ENCODE measurements at regions of chr1 and their contacts with region 1.

Region 1: DNA sequence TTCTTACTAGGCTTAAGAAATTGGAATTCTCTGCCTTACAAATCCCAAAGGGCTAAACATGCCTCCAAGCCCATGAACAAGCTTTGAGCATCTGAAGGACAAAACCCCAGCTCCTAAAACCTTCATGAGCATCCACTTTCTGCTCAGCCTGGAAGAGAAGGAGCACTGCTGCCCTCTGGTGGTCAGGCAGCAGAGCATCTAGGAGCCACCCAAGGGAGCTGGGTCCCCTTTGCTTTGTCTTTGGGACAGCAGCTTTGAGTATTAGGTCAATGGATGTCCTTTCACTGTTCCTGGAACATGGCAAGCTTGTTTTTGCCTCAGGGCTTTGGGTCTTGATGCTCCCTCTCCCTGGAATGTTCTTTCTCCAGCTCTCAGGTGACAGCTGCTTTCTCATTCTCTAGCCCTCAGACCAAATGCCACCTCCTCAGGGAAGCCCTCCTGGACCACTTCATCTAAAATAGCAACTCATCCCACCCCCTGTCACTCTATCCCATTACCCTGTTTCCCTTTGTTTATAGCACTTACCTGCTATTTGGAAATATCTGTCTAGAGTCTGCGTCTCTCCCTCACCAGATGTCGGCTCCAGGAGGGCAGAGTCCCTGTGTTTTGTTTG is 25.7 kb downstream of the RAB7B start:
- DNase-seq: peak; percentile 63 to 70 (median 69)
- H3K4me3 ChIP-seq: no peak overlapping the region
- H3K4me3 Mint-ChIP-seq: no peak overlapping the region
- H3K27ac ChIP-seq: no peak overlapping the region
- H3K27ac Mint-ChIP-seq: peak overlapping the region in 1 of 7 donors; percentile 5
- H3K4me1 ChIP-seq: no peaks in the 10 kb centered on the region
- H3K4me1 Mint-ChIP-seq: peaks cover 0 to 6% (median under 1%) of the 10 kb centered on the region in 4 donors
- H3K27me3 ChIP-seq: no peaks in the 10 kb centered on the region
- H3K27me3 Mint-ChIP-seq: peaks cover 4 to 7% of the 10 kb centered on the region in 2 donors

Region 2: GRCh38 chr1:205528887-205529825 is 448.4 kb before region 1 on chr1:
- CTCF ChIA-PET with region 1: interaction called, 3 read pairs
- POLR2A ChIA-PET with region 1: no interaction called
- intact Hi-C with region 1: loop called (anchors 2 kb)
- DNase-seq: peak; percentile 66 to 76 (median 69)
- H3K4me3 ChIP-seq: no peak overlapping the region
- H3K4me3 Mint-ChIP-seq: peak overlapping the region in 5 of 8 donors; percentile 26 to 73 (median 39)
- H3K27ac ChIP-seq: no peak overlapping the region
- H3K27ac Mint-ChIP-seq: peak overlapping the region in 1 of 7 donors; percentile 73
- H3K4me1 ChIP-seq: no peaks in the 10 kb centered on the region
- H3K4me1 Mint-ChIP-seq: peaks cover 0 to 5% (median 4%) of the 10 kb centered on the region in 4 donors
- H3K27me3 ChIP-seq: no peaks in the 10 kb centered on the region
- H3K27me3 Mint-ChIP-seq: peaks cover 3 to 4% of the 10 kb centered on the region in 2 donors

Region 3: DNA sequence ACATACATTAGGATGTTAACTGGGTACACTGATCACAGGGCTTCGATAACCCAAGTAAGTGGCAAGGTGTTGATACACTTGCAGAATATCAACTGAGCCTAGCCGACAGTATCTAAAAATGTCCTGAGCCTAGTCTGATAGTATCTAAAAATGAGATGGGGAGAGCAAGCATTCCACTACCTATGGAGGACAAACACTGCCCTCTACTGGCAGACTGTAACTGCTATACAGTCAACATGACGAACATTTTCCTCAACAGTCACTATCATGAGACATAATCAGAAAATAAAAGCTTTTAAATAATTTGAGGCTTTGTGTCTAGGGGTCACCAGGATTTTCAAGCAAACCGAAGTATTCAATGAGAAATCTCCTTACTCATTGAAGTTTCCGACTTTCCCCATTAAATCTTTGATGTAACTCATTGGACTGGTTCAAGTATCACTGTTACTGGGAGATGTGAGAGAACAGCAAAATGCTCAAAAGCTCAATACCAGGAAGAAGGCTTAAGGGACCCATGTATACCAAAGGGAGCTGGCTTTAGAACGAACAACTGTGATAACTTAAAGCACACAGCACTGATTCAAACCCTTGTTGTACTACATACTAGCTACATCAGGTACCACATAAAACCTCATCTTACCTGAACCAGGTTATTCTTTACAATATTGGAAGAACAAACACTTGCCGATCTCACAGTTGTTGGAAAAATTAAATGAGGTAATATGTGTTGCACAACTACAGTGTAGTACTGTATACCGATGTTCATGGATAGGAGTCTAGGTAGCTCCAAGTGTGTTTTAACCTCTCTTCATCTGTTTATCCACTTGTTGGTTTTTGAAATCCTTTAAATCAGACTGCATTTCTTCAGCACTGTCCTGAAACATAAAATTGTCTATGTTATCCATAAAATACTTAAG is 266.1 kb before region 1 on chr1:
- CTCF ChIA-PET with region 1: interaction called, 13 read pairs
- POLR2A ChIA-PET with region 1: no interaction called
- intact Hi-C with region 1: loop called (anchors 5 kb)
- DNase-seq: peak; percentile 54 to 67 (median 62)
- H3K4me3 ChIP-seq: no peak overlapping the region
- H3K4me3 Mint-ChIP-seq: no peak overlapping the region
- H3K27ac ChIP-seq: no peak overlapping the region
- H3K27ac Mint-ChIP-seq: peak overlapping the region in 4 of 7 donors; percentile 25 to 68 (median 56)
- H3K4me1 ChIP-seq: peaks cover 3% of the 10 kb centered on the region
- H3K4me1 Mint-ChIP-seq: peaks cover 5 to 14% (median 11%) of the 10 kb centered on the region in 4 donors
- H3K27me3 ChIP-seq: no peaks in the 10 kb centered on the region
- H3K27me3 Mint-ChIP-seq: no peaks in the 10 kb centered on the region

Region 4: DNA sequence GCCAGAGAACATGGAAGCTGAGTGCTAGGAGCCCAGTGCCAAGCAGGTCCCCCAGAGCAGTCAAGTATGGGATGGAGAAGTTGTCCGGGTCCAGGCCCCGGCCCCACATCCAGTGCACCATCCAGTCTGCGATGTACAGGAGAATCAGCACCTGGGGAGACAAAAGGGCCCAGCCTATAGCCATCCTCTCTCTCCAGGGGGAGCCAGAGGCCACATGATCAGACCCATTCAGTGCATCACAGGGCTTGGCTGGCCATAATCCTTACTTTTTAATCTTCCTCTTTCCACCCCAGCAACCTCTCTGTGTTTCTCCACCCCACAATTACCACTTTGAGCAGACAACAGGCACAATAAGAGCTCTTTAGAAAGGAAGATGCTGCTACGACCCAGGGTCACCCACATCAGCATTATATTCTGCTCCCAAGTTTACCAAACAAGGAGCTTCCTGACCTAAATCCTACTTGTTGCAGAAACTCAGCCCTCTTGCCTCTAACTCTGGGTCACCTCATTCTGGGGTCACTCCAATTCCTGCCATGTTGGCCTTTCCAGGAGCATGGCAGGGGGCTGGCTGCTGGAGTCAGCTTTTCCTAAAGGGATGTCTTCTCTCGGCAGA is 185.8 kb before region 1 on chr1:
- CTCF ChIA-PET with region 1: interaction called, 268 read pairs
- POLR2A ChIA-PET with region 1: interaction called, 10 read pairs
- intact Hi-C with region 1: no loop called
- DNase-seq: peak; percentile 51 to 64 (median 56)
- H3K4me3 ChIP-seq: no peak overlapping the region
- H3K4me3 Mint-ChIP-seq: no peak overlapping the region
- H3K27ac ChIP-seq: no peak overlapping the region
- H3K27ac Mint-ChIP-seq: peak overlapping the region in 2 of 7 donors; percentile 74 to 81
- H3K4me1 ChIP-seq: no peaks in the 10 kb centered on the region
- H3K4me1 Mint-ChIP-seq: no peaks in the 10 kb centered on the region
- H3K27me3 ChIP-seq: no peaks in the 10 kb centered on the region
- H3K27me3 Mint-ChIP-seq: no peaks in the 10 kb centered on the region

Region 5: GRCh38 chr1:205879975-205880374 is 97.5 kb before region 1 on chr1:
- CTCF ChIA-PET with region 1: no interaction called
- POLR2A ChIA-PET with region 1: no interaction called
- intact Hi-C with region 1: no loop called
- DNase-seq: no peak
- H3K4me3 ChIP-seq: no peak overlapping the region
- H3K4me3 Mint-ChIP-seq: no peak overlapping the region
- H3K27ac ChIP-seq: no peak overlapping the region
- H3K27ac Mint-ChIP-seq: no peak overlapping the region
- H3K4me1 ChIP-seq: no peaks in the 10 kb centered on the region
- H3K4me1 Mint-ChIP-seq: no peaks in the 10 kb centered on the region
- H3K27me3 ChIP-seq: no peaks in the 10 kb centered on the region
- H3K27me3 Mint-ChIP-seq: peaks cover 2 to 10% of the 10 kb centered on the region in 2 donors

Region 6: GRCh38 chr1:205919026-205919746 is 58.3 kb before region 1 on chr1:
- CTCF ChIA-PET with region 1: interaction called, 43 read pairs
- POLR2A ChIA-PET with region 1: no interaction called
- intact Hi-C with region 1: loop called (anchors 1 kb)
- DNase-seq: peak; percentile 41 to 62 (median 51)
- H3K4me3 ChIP-seq: no peak overlapping the region
- H3K4me3 Mint-ChIP-seq: no peak overlapping the region
- H3K27ac ChIP-seq: no peak overlapping the region
- H3K27ac Mint-ChIP-seq: no peak overlapping the region
- H3K4me1 ChIP-seq: no peaks in the 10 kb centered on the region
- H3K4me1 Mint-ChIP-seq: peaks cover 0 to 1% (median 0%) of the 10 kb centered on the region in 4 donors
- H3K27me3 ChIP-seq: no peaks in the 10 kb centered on the region
- H3K27me3 Mint-ChIP-seq: peaks cover 0 to 5% of the 10 kb centered on the region in 2 donors

Region 7: DNA sequence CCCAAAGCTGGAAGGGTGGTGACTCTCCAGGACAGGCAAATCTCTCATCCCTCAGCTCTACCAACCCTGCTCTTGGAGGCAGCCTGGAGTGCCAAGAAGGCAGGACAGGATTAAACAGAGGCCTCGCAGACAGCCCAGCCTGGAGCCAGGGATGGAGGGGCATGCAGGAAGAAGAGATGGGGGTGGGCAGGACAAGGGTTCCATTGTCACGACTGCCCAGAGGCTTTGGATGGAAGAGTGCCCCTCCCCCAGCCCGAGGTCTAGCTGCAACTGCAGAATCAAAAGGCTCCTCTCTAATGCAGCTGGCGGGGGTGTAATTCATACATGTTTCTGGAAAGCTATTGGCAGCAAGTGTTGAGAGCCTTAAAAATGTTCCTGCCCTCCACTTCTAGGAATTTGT is 16.8 kb after region 1 on chr1:
- CTCF ChIA-PET with region 1: interaction called, 12 read pairs
- POLR2A ChIA-PET with region 1: no interaction called
- intact Hi-C with region 1: no loop called
- DNase-seq: no peak
- H3K4me3 ChIP-seq: no peak overlapping the region
- H3K4me3 Mint-ChIP-seq: no peak overlapping the region
- H3K27ac ChIP-seq: no peak overlapping the region
- H3K27ac Mint-ChIP-seq: no peak overlapping the region
- H3K4me1 ChIP-seq: no peaks in the 10 kb centered on the region
- H3K4me1 Mint-ChIP-seq: no peaks in the 10 kb centered on the region
- H3K27me3 ChIP-seq: no peaks in the 10 kb centered on the region
- H3K27me3 Mint-ChIP-seq: peaks cover 10 to 14% of the 10 kb centered on the region in 2 donors

Region 8: DNA sequence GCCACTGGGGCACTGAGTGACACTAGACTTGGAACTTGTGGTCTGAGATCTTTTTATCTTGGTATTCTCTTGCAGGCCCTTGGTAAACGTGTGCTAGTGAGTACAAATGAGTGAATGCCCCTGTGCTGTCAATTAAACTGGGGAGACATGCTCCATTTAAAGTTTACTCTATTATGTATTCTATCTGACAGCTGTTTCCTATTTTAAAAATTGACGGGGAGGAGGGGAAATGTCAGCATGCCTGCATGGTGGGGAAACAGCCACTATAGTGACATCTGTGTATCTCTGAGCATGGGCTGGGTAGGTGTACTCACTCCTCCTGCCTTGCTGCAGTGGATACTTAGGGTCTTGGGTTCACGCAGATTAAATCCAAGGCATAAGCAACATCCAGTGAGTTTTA is 433.8 kb after region 1 on chr1:
- CTCF ChIA-PET with region 1: no interaction called
- POLR2A ChIA-PET with region 1: no interaction called
- intact Hi-C with region 1: no loop called
- DNase-seq: no peak
- H3K4me3 ChIP-seq: no peak overlapping the region
- H3K4me3 Mint-ChIP-seq: no peak overlapping the region
- H3K27ac ChIP-seq: no peak overlapping the region
- H3K27ac Mint-ChIP-seq: no peak overlapping the region
- H3K4me1 ChIP-seq: no peaks in the 10 kb centered on the region
- H3K4me1 Mint-ChIP-seq: no peaks in the 10 kb centered on the region
- H3K27me3 ChIP-seq: no peaks in the 10 kb centered on the region
- H3K27me3 Mint-ChIP-seq: no peaks in the 10 kb centered on the region

Measured in CD4-positive, alpha-beta memory T cell (primary cell).